A673 (cell line): ENCODE measurements at regions of chr2 and their contacts with region 1.

Region 1: DNA sequence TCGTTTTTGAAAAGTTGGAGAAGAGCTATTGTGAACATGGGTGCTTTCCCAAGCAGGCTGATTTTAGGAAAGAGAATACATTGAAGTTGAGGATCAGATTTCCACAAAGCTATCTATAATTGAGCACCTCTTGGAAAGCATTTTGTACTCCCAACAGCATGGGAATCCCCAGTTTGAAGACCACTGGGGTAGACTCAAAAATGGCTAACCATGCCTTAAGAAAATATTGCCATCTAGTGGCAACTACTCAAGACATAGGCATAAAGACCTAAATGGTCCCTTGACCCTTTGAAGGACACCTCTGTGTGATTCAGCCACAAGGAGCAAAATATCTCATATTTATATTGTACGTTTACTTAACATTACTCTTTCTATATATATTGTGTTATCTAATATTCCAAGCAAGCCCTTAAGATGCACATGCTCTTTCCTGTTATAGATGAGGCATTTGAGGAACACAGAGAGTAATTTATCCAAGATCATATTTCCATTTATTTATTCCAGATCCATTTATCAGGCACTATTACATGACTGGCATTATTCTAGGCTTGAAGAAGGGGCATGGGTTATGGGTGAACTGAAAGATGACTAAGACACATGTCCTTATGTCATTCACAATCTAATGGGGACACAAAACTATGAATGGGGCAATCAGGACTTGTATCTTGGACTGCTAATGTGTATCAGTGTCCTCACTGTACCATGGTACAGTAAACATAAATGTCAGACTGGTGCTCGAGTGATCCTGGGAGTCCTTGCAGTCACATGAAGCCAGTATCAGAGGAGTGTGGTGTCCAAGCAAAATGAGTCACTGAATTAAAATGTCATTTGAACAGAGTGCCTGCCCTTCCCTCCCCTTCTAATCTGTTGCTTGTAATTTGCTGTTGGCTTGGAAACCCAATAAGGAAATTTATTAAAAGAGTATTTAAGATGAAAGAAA is 121.0 kb upstream of the XPO1 start:
- DNase-seq: peak; percentile 57
- H3K4me3 ChIP-seq: no peak overlapping the region
- H3K27ac ChIP-seq: no peak overlapping the region
- H3K4me1 ChIP-seq: no peaks in the 10 kb centered on the region
- H3K27me3 ChIP-seq: no peaks in the 10 kb centered on the region
- CTCF ChIP-seq: peak; percentile 68

Region 2: DNA sequence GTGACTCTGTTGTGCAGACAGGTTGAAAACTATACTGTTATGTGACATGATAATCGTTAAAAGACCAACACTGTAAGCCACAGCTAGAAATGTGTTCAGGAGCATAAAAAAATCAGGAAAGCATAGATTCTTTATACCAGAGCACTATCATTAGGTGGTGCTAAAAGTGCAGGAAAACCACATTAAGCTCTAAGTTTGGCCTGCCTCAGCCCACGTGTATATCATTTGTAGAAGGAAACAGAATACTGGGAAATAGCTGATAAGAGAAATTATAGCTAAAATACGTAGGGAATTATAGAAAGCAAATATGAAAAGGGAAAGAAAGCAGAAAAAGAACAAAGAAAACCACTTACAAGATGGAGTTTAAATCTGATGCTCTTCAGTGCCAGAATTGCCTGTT is 523.6 kb before region 1 on chr2:
- CTCF ChIA-PET with region 1: no interaction called
- POLR2A ChIA-PET with region 1: no interaction called
- intact Hi-C with region 1: loop called (anchors 2 kb)
- DNase-seq: peak; percentile 51
- H3K4me3 ChIP-seq: no peak overlapping the region
- H3K27ac ChIP-seq: no peak overlapping the region
- H3K4me1 ChIP-seq: no peaks in the 10 kb centered on the region
- H3K27me3 ChIP-seq: no peaks in the 10 kb centered on the region
- CTCF ChIP-seq: peak; percentile 60

Region 3: GRCh38 chr2:61585383-61585782 is 73.7 kb before region 1 on chr2:
- CTCF ChIA-PET with region 1: no interaction called
- POLR2A ChIA-PET with region 1: no interaction called
- intact Hi-C with region 1: no loop called
- DNase-seq: no peak
- H3K4me3 ChIP-seq: no peak overlapping the region
- H3K27ac ChIP-seq: no peak overlapping the region
- H3K4me1 ChIP-seq: no peaks in the 10 kb centered on the region
- H3K27me3 ChIP-seq: no peaks in the 10 kb centered on the region
- CTCF ChIP-seq: no peak